ENCODE measurements at regions of chr16 and their contacts with region 1.

Region 1: DNA sequence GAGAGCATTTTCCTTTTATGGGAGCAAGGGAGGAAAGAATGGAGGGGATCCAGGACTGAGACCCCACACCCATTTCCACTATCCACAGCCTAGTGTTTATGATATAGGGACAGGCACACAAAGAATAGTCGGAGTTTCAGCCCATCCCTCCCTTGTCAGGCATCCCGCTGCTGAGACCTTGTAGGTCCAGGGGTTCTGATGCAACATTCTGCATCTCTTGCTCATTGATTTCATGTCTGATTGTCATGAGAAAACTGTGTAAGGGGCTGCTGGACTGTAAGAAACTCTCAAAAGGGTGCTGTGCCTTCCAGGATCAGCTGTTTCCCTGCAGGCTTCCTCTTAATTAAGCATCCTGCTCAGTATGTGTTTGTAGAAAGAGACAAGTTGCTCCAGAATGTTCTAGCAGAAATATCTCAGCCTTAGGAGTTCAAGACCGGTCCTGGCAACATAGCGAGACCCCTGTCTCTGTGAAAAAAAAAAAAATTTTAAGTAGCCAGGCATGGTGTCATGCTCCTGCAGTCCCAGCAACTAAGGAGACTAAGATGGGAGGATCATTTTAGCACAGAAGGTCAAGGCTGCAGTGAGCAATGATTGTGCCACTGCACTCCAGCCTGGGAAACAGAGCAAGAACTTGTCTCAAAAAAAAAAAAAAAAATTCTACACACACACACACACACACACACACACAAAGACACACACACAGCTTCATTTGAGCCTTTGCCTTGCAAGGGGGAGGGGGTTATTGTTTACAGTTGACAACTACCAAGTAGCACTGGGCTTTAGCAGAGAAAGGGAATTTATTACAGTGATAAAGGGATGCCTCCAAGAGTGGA is 5.1 kb upstream of the POLR3E start:
- DNase-seq: no peak
- ATAC-seq: no peak
- H3K4me3 ChIP-seq: no peak overlapping the region
- H3K27ac ChIP-seq: no peak overlapping the region
- H3K4me1 ChIP-seq: peaks cover 0 to 3% (median 0%) of the 10 kb centered on the region in 3 donors
- H3K27me3 ChIP-seq: peaks cover 0 to 2% (median 0%) of the 10 kb centered on the region in 4 donors
- CTCF ChIP-seq: no peak

Region 2: GRCh38 chr16:22206013-22206841 is 85.8 kb before region 1 on chr16 and contains the start of gene EEF2K:
- intact Hi-C with region 1: loop called in 2 of 3 experiments (anchors 5 to 10 kb)
- DNase-seq: peak; percentile 92 to 98 (median 96)
- ATAC-seq: peak; percentile 88 to 92 (median 89)
- H3K4me3 ChIP-seq: peak within 1 kb of the TSS; percentile 63 to 95 (median 86)
- H3K27ac ChIP-seq: peak within 1 kb of the TSS; percentile 83 to 92 (median 86)
- H3K4me1 ChIP-seq: peaks cover 0 to 18% (median 11%) of the 10 kb centered on the region in 3 donors
- H3K27me3 ChIP-seq: no peaks in the 10 kb centered on the region
- CTCF ChIP-seq: peak; percentile 70 to 87 (median 82)
- total RNA-seq, gene EEF2K: 15.0 to 21.1 (median 18.2) TPM